ENCODE measurements at regions of chrX and their contacts with region 1.

Region 1: GRCh38 chrX:46325312-46325877 is 219.8 kb downstream of the ZNF674 start:
- DNase-seq: peak; percentile 10
- H3K4me3 Mint-ChIP-seq: no peak overlapping the region
- H3K27ac Mint-ChIP-seq: peak overlapping the region; percentile 69
- H3K4me1 Mint-ChIP-seq: peaks cover 52% of the 10 kb centered on the region
- H3K27me3 Mint-ChIP-seq: no peaks in the 10 kb centered on the region

Region 2: GRCh38 chrX:46208225-46208854 is 117.1 kb before region 1 on chrX:
- intact Hi-C with region 1: loop called (anchors 10 kb)
- DNase-seq: no peak
- H3K4me3 Mint-ChIP-seq: no peak overlapping the region
- H3K27ac Mint-ChIP-seq: no peak overlapping the region
- H3K4me1 Mint-ChIP-seq: peaks cover 27% of the 10 kb centered on the region
- H3K27me3 Mint-ChIP-seq: no peaks in the 10 kb centered on the region

Region 3: DNA sequence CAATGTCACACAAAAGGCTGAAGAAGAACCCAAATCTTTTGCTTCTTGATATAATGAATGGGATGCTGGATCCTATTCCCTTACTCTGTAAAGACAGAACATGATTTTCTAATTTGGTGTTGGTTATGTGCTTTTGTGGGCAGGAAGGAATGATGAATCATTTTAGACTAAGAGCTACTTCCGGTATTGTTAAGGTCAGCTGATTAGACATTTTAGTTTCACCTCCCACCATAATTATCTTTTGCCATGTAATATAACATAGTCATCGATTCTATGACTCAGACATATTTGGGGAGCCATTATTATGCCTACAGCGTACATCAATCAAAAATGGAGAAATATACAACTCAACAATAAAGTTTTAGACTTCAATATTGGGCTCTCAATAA is 45.5 kb before region 1 on chrX:
- intact Hi-C with region 1: loop called (anchors 2 kb)
- DNase-seq: no peak
- H3K4me3 Mint-ChIP-seq: no peak overlapping the region
- H3K27ac Mint-ChIP-seq: peak overlapping the region; percentile 90
- H3K4me1 Mint-ChIP-seq: peaks cover 21% of the 10 kb centered on the region
- H3K27me3 Mint-ChIP-seq: no peaks in the 10 kb centered on the region

Measured in activated T-helper 2 cell treated with anti-CD3 and anti-CD28 coated beads, Interferon-gamma antibody, Interleukin-2, Interleukin-4, amounts not matched to agents 10 μg/mL and 5 μg/mL and 100 μg/mL, durations not matched to agents 14 hours and 24 hours and 36 hours (primary cell).